ENCODE measurements at regions of chrX and their contacts with region 1.

Region 1: GRCh38 chrX:121135488-121136207 is 88.2 kb downstream of the GLUD2 start:
- DNase-seq: no peak
- H3K4me3 ChIP-seq: no peak overlapping the region
- H3K27ac ChIP-seq: no peak overlapping the region
- H3K4me1 ChIP-seq: no peaks in the 10 kb centered on the region
- H3K27me3 ChIP-seq: no peaks in the 10 kb centered on the region
- CTCF ChIP-seq: no peak

Region 2: DNA sequence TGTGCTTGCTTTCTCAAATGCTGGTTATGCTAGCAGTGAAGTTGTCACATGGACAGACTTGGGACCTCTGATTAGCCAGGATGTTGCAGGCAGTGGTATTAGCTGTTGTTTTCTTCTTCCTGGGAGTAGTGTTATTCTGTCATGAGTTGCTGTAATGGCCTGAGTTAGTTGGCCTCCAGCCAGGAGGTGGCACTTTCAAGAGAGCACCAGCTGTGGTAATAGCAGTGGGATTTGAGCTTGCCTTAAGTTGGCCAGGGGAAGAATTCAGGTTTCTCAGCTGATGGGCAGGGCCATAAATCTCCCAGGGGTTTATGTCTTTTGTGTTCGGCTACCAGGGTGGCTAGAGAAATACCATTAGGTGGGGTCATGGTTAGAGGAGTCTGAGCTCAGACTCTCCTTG is 44.3 kb after region 1 on chrX:
- CTCF ChIA-PET with region 1: no interaction called
- POLR2A ChIA-PET with region 1: no interaction called
- intact Hi-C with region 1: loop called (anchors 1 kb)
- DNase-seq: peak; percentile 42
- H3K4me3 ChIP-seq: no peak overlapping the region
- H3K27ac ChIP-seq: no peak overlapping the region
- H3K4me1 ChIP-seq: no peaks in the 10 kb centered on the region
- H3K27me3 ChIP-seq: no peaks in the 10 kb centered on the region
- CTCF ChIP-seq: no peak

Measured in A673 (cell line).